H1 (cell line): ENCODE measurements at regions of chr4 and their contacts with region 1.

Region 1: GRCh38 chr4:8267077-8267476 is 2.5 kb upstream of the HTRA3 start:
- DNase-seq: peak; percentile 54 to 83
- H3K4me3 ChIP-seq: no peak overlapping the region
- H3K27ac ChIP-seq: no peak overlapping the region
- H3K4me1 ChIP-seq: peaks cover 0 to 7% (median 4%) of the 10 kb centered on the region in 4 experiments; a peak in 6 of 7 replicates
- H3K27me3 ChIP-seq: peaks cover 7 to 28% (median 20%) of the 10 kb centered on the region in 4 experiments; a peak in 6 of 7 replicates
- CTCF ChIP-seq: peak in 2 of 3 experiments; percentile 72 to 73; a peak in 3 of 4 replicates
- EP300 ChIP-seq: no peak
- POLR2A ChIP-seq: no peak
- RAD21 ChIP-seq: peak; percentile 84

Region 2: GRCh38 chr4:7802093-7802726 is 464.9 kb before region 1 on chr4:
- CTCF ChIA-PET with region 1: no interaction called
- POLR2A ChIA-PET with region 1: no interaction called
- DNase-seq: peak; percentile 39 to 95
- H3K4me3 ChIP-seq: no peak overlapping the region
- H3K27ac ChIP-seq: no peak overlapping the region
- H3K4me1 ChIP-seq: peaks cover 11 to 20% (median 17%) of the 10 kb centered on the region in 4 experiments
- H3K27me3 ChIP-seq: no peaks in the 10 kb centered on the region
- CTCF ChIP-seq: peak; percentile 72 to 89 (median 85)
- EP300 ChIP-seq: no peak
- POLR2A ChIP-seq: no peak
- RAD21 ChIP-seq: peak; percentile 80 to 85

Region 3: GRCh38 chr4:8115916-8116315 is 151.2 kb before region 1 on chr4:
- CTCF ChIA-PET with region 1: no interaction called
- POLR2A ChIA-PET with region 1: no interaction called
- DNase-seq: no peak
- H3K4me3 ChIP-seq: no peak overlapping the region
- H3K27ac ChIP-seq: no peak overlapping the region
- H3K4me1 ChIP-seq: peaks cover 3 to 18% (median 12%) of the 10 kb centered on the region in 4 experiments
- H3K27me3 ChIP-seq: no peaks in the 10 kb centered on the region
- CTCF ChIP-seq: no peak
- EP300 ChIP-seq: no peak
- POLR2A ChIP-seq: no peak
- RAD21 ChIP-seq: no peak

Region 4: DNA sequence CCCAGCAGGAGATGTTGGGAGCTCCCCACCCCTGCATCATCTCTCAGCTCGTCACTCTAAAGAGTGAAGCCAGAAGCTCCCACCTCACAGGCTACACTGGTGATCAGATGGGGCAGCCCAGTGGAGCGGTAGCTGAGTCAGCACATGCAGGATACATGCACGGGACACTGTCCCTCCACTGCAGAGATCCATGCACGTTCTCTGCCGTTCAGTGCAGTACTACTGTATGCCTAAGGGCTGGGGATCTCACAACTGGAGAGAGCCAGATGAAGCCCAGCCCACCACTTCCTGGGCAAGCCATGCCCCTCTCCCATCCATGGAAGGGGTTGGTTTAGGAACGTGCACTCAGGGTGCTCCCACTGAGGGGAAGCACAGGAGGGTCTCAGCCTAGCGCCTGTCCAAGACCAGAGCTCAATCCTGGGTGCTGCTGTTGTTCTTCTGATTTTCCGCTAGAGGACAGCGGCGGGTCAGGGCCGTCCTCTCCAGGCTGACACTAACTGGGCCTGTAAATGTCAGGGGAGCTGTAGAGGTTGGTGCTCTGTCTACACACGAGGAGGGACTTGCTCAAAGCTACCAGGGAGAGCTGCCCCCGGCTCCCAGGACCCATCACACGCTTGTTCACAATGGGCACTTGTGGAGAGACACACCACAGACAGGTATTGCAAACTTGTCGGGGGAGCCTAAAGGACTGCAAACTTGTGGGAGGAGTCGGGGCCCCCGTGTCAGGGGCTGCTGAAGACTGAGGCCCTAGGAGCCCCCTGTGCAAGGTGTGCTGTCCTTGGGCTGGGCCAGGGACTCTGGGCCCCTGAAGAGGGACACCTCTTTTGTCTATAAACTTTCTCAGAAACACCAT is 90.3 kb before region 1 on chr4:
- CTCF ChIA-PET with region 1: interaction called, 14 read pairs
- POLR2A ChIA-PET with region 1: no interaction called
- DNase-seq: peak; percentile 41 to 67
- H3K4me3 ChIP-seq: no peak overlapping the region
- H3K27ac ChIP-seq: no peak overlapping the region
- H3K4me1 ChIP-seq: no peaks in the 10 kb centered on the region
- H3K27me3 ChIP-seq: no peaks in the 10 kb centered on the region
- CTCF ChIP-seq: peak in 2 of 3 experiments; percentile 90 to 96; a peak in 3 of 4 replicates
- EP300 ChIP-seq: no peak
- POLR2A ChIP-seq: no peak
- RAD21 ChIP-seq: peak; percentile 88 to 91

Region 5: GRCh38 chr4:8250227-8250626 is 16.9 kb before region 1 on chr4:
- CTCF ChIA-PET with region 1: interaction called, 14 read pairs
- POLR2A ChIA-PET with region 1: no interaction called
- DNase-seq: no peak
- H3K4me3 ChIP-seq: no peak overlapping the region
- H3K27ac ChIP-seq: no peak overlapping the region
- H3K4me1 ChIP-seq: no peaks in the 10 kb centered on the region
- H3K27me3 ChIP-seq: no peaks in the 10 kb centered on the region
- CTCF ChIP-seq: no peak
- EP300 ChIP-seq: no peak
- POLR2A ChIP-seq: no peak
- RAD21 ChIP-seq: no peak

Region 6: DNA sequence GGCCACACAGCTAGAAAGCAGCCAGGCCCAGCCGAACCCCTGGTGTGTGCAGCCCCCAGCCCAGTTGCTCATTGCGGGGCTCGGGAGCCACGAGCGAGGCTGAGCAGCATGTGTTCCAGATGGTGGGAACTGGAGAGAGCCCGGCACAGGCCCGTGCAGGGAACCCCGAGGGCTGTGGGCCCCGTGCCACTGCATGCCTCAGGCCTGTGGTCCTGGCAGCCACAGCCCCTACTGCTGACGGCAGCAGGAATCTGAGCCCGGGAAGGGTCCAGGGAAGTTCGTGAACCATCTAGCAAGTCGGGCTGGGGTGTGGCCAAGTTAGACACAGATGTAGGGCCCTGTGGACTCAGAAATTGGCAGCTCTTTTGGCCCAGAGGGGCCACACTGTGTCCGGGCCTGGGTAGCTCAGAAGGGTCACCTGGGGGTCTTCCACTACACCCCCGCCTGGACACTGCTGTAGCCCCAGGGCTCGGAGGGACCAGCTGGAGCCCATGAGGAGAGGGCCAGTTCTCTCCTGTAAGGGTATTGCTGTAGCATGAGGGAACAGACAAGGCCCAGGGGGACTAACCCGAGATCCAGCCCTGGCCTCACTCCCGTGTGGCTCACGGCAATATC is 14.5 kb after region 1 on chr4:
- CTCF ChIA-PET with region 1: interaction called, 25 read pairs
- POLR2A ChIA-PET with region 1: interaction called, 4 read pairs
- DNase-seq: no peak
- H3K4me3 ChIP-seq: no peak overlapping the region
- H3K27ac ChIP-seq: no peak overlapping the region
- H3K4me1 ChIP-seq: no peaks in the 10 kb centered on the region
- H3K27me3 ChIP-seq: no peaks in the 10 kb centered on the region
- CTCF ChIP-seq: no peak
- EP300 ChIP-seq: no peak
- POLR2A ChIP-seq: no peak
- RAD21 ChIP-seq: no peak

Region 7: GRCh38 chr4:8303485-8304301 is 36.6 kb after region 1 on chr4:
- CTCF ChIA-PET with region 1: interaction called, 15 read pairs
- POLR2A ChIA-PET with region 1: interaction called, 3 read pairs
- DNase-seq: peak in 1 of 2 experiments; percentile 32
- H3K4me3 ChIP-seq: no peak overlapping the region
- H3K27ac ChIP-seq: no peak overlapping the region; the same call in 1 of the 2 replicates
- H3K4me1 ChIP-seq: peaks cover 0 to 9% (median 6%) of the 10 kb centered on the region in 4 experiments; a peak in 4 of 7 replicates
- H3K27me3 ChIP-seq: peaks cover 0 to 4% (median 0%) of the 10 kb centered on the region in 4 experiments; a peak in 2 of 7 replicates
- CTCF ChIP-seq: no peak
- EP300 ChIP-seq: no peak
- POLR2A ChIP-seq: no peak
- RAD21 ChIP-seq: no peak

Region 8: DNA sequence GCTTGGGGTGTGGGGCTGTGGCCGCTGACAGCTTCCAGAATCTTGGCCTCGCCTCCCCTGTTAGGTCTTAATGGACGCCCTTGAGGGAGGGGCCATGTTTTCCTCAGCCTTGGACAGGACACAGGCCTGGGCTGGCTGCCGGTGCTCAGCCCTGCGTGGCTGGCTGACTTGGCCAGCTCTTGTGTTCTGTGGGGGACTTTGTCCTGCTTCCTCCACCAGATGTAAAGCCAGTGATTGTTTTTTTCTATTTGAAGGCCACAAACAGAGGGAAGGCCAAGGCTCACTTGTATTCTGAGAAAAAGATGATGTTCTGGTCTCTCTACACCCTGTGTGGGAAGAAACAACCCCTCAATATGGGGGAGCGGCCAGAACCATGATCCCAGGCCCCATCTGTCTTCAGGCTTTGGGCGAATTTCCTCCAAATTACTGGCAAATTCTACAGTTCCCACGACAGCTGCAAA is 73.7 kb after region 1 on chr4:
- CTCF ChIA-PET with region 1: interaction called, 21 read pairs
- POLR2A ChIA-PET with region 1: no interaction called
- DNase-seq: no peak
- H3K4me3 ChIP-seq: no peak overlapping the region
- H3K27ac ChIP-seq: no peak overlapping the region
- H3K4me1 ChIP-seq: peaks cover 0 to 4% (median 2%) of the 10 kb centered on the region in 4 experiments; a peak in 3 of 7 replicates
- H3K27me3 ChIP-seq: no peaks in the 10 kb centered on the region
- CTCF ChIP-seq: no peak
- EP300 ChIP-seq: no peak
- POLR2A ChIP-seq: no peak
- RAD21 ChIP-seq: no peak

Region 9: DNA sequence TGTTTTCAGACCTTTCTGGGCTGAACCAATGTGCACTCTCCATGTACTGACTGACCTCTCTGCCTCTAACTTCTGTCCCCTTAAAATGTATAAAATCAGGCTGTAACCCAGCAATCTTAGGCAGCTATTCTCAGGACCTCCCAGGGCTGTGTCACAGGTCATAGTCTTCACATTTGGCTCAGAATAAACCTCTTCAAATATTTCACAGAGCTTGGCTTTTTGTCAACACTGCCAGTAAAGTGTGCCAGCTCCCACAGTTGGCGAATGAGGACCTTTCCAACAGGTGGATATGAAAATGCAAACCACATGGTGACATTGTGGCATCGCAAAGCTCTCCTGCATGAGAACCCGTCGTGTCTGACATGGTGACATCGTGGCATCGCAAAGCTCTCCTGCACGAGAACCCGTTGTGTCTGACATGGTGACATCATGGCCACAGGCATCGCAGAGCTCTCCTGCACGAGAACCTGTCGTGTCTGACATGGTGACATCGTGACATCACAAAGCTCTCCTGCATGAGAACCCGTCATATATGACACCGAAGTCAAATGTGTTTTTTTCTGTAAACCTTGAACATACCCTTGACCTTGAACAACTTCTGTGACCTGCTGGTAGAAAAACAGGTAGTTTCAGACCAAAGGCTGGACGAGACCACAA is 97.2 kb after region 1 on chr4:
- CTCF ChIA-PET with region 1: no interaction called
- POLR2A ChIA-PET with region 1: no interaction called
- DNase-seq: no peak
- H3K4me3 ChIP-seq: no peak overlapping the region
- H3K27ac ChIP-seq: no peak overlapping the region
- H3K4me1 ChIP-seq: peaks cover 0 to 3% (median 0%) of the 10 kb centered on the region in 4 experiments; a peak in 2 of 7 replicates
- H3K27me3 ChIP-seq: peaks cover 0 to 6% (median under 1%) of the 10 kb centered on the region in 4 experiments; a peak in 4 of 7 replicates
- CTCF ChIP-seq: no peak
- EP300 ChIP-seq: no peak
- POLR2A ChIP-seq: no peak
- RAD21 ChIP-seq: no peak

Region 10: GRCh38 chr4:8410641-8411271 is 143.7 kb after region 1 on chr4:
- CTCF ChIA-PET with region 1: interaction called, 74 read pairs
- POLR2A ChIA-PET with region 1: no interaction called
- DNase-seq: peak; percentile 53 to 85
- H3K4me3 ChIP-seq: no peak overlapping the region
- H3K27ac ChIP-seq: no peak overlapping the region
- H3K4me1 ChIP-seq: peaks cover 0 to 5% (median 4%) of the 10 kb centered on the region in 4 experiments; a peak in 6 of 7 replicates
- H3K27me3 ChIP-seq: no peaks in the 10 kb centered on the region
- CTCF ChIP-seq: peak in 2 of 3 experiments; percentile 62 to 73; a peak in 3 of 4 replicates
- EP300 ChIP-seq: no peak
- POLR2A ChIP-seq: no peak
- RAD21 ChIP-seq: peak; percentile 64 to 74

Region 11: DNA sequence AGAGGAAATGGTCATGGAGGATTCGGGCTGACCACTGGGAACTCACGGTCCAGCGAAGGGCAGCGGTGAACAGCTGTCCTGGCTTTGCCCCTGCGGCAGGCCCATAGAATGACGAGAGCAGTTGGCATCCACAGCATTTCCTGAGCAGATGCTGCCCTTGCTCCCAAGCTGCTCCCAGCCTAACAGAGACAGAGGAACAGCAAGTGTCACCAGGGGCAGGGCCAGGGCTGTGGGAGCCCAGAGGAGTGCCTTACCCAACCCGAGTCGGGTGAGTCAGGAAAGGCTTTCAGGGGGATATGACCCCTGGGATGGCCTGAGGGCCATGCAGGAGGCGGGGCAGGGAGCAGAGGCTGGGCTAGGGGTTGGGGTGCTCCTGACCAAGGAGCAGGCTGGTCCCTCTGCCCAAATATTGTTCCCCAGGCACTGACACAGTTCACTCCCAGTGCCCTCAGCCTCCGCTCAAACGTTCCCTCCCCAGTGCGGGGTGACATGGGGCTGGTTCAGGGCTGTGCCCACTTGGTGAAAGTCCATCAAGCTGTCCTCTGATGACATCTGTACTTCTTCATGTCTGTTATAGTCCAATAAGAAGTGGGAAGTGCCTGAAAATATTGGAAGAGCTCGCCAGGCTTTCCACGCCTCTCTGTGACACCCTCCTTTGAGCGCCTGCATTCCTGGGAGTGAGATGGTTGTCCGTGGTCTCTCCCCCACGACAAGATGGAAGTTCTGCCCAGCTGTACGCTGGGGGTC is 248.4 kb after region 1 on chr4:
- CTCF ChIA-PET with region 1: no interaction called
- POLR2A ChIA-PET with region 1: no interaction called
- DNase-seq: no peak
- H3K4me3 ChIP-seq: no peak overlapping the region
- H3K27ac ChIP-seq: no peak overlapping the region
- H3K4me1 ChIP-seq: no peaks in the 10 kb centered on the region
- H3K27me3 ChIP-seq: no peaks in the 10 kb centered on the region
- CTCF ChIP-seq: no peak
- EP300 ChIP-seq: no peak
- POLR2A ChIP-seq: no peak
- RAD21 ChIP-seq: no peak